ENCODE measurements at regions of chr6 and their contacts with region 1.

Region 1: DNA sequence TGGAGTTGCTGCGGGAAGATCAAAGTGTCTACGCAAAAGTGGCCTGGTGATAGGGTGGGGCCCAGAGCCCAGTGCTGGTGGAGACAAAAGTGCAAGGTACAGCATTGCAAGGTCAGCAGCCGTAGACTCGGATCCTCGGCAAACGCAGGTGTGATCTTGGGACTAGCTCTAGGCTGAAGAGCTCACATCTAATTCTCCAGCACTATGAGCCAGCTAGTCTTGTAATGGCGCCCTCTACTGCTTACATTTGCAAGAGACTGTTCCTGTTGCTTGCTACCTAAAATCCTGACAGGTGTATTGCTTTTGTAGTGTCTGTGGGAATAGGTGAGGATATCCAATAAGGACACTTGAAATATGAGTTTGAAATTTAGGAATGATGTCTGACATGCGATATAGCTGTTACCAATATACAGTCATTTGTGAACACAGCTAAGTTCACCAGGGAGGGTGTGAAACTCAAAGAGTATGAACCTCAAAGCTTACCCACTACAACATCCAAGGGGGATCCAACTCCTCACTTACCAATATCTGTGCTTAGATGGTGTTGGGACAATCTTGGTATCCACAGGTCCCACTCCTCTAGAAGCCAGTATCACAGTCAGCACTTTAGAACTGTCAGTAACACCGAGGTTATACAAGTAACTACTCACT is 58.4 kb downstream of the PDE7B start:
- DNase-seq: peak; percentile 69
- H3K4me3 ChIP-seq: no peak overlapping the region
- H3K27ac ChIP-seq: no peak overlapping the region
- H3K4me1 ChIP-seq: no peaks in the 10 kb centered on the region
- H3K27me3 ChIP-seq: no peaks in the 10 kb centered on the region
- CTCF ChIP-seq: peak; percentile 53

Region 2: GRCh38 chr6:135451693-135452092 is 458.2 kb before region 1 on chr6:
- intact Hi-C with region 1: loop called (anchors 5 kb)
- DNase-seq: no peak
- H3K4me3 ChIP-seq: no peak overlapping the region
- H3K27ac ChIP-seq: no peak overlapping the region
- H3K4me1 ChIP-seq: no peaks in the 10 kb centered on the region
- H3K27me3 ChIP-seq: no peaks in the 10 kb centered on the region
- CTCF ChIP-seq: peak; percentile 59

Region 3: DNA sequence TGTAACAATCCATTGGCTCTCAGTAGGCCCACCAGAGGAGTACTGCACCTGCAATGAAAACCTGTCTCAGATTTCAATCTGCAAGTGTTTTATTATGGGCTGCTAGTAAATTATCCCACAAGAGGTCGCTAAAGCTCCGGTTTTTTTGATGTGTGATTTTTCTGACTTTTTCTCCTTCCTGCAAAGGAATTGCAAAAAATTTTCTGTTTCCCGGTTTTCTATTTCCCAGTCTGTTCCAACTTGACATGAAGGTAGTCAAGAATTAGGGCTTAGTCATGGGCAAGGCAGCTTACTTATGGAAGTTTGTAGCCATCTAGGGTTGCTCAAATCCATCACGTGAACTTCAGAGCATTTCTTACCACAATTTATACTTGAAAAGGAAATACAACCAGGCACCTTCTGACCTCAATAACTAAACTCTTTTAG is 373.9 kb before region 1 on chr6:
- intact Hi-C with region 1: loop called (anchors 10 kb)
- DNase-seq: no peak
- H3K4me3 ChIP-seq: no peak overlapping the region
- H3K27ac ChIP-seq: no peak overlapping the region
- H3K4me1 ChIP-seq: no peaks in the 10 kb centered on the region
- H3K27me3 ChIP-seq: no peaks in the 10 kb centered on the region
- CTCF ChIP-seq: peak; percentile 50